CD8-positive, alpha-beta memory T cell (primary cell): ENCODE measurements at regions of chr9 and their contacts with region 1.

Region 1: DNA sequence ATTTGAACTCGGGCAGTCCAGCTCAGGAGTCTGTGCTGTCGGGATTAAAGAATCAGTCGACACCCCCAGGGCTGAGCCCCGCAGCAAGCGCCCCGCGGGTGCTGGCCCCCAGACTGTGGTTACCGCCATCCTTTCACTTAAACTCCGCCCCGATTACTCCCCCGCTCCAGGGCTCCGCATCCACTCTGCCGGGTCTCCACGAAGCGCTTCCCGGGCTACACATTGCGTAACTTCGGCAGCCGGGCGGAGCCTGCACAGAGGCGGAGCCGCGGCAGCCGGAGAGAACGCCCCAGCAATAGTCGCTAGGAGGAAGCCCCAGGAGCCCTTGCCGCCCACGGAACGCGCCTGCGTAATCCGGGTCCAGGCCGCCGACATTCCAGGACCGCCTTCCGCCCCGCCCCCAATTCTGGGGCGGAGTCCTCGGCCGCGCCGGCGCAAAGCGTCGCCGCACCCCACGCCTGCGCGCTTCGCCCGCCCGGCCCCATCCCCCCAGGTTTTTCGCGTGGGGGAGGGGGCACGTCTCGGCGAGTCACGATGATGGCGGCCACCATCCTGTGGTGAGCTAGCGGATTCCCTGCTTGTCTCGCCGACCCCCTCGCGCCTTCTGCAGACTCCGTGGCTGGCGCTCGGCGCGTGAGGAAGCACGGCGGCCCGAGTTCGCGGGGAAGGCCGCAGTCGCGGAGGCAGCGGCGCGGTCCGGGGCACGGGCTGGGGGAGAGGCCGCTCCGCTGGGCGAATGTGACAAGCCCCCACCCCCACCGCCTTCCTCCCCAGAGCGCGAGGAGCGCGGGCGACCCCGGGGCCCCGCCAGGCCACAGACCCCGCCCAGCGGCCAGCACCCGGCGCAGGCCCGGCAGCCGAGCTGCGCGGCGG is at the start of gene RAD23B:
- DNase-seq: peak; percentile 97 to 99 (median 99)
- H3K4me3 ChIP-seq: peak within 1 kb of the TSS; percentile 86
- H3K4me3 Mint-ChIP-seq: peak within 1 kb of the TSS; percentile 89 to 99 (median 96)
- H3K27ac ChIP-seq: peak within 1 kb of the TSS; percentile 85
- H3K27ac Mint-ChIP-seq: peak within 1 kb of the TSS; percentile 76 to 99 (median 97)
- H3K4me1 ChIP-seq: peaks cover 32% of the 10 kb centered on the region
- H3K4me1 Mint-ChIP-seq: peaks cover 40 to 47% (median 46%) of the 10 kb centered on the region in 3 donors
- H3K27me3 ChIP-seq: no peaks in the 10 kb centered on the region
- H3K27me3 Mint-ChIP-seq: peaks cover 0 to 3% of the 10 kb centered on the region in 2 donors
- total RNA-seq, gene RAD23B: 146 to 150 TPM

Region 2: DNA sequence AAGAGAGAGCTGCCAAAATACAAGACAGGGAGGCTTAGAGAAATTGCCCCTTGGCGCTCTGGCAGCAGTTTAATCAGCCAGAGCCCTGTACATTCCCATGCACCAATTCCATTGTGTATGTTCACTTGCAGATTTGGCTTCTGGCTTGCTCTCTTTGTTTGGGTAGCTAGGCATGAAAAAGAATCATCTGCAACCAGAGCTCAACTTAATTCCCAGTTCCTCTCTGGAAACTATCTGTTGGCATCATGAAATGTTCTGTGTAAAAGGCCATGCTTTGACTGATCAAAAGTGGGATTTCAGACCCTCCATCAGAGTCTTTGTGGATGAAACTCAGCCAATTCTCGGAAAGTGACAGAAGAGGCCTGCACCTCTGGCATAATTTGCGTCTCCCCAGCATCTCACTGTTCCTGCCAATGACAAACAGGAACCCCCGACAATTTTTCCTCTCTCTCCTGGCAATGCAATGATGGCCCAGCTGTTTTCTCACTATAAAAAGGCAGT is 53.7 kb before region 1 on chr9:
- CTCF ChIA-PET with region 1: no interaction called
- POLR2A ChIA-PET with region 1: no interaction called
- DNase-seq: no peak
- H3K4me3 ChIP-seq: no peak overlapping the region
- H3K4me3 Mint-ChIP-seq: no peak overlapping the region
- H3K27ac ChIP-seq: no peak overlapping the region
- H3K27ac Mint-ChIP-seq: peak overlapping the region in 1 of 8 donors; percentile 75
- H3K4me1 ChIP-seq: no peaks in the 10 kb centered on the region
- H3K4me1 Mint-ChIP-seq: no peaks in the 10 kb centered on the region
- H3K27me3 ChIP-seq: no peaks in the 10 kb centered on the region
- H3K27me3 Mint-ChIP-seq: peaks cover 14 to 49% of the 10 kb centered on the region in 2 donors

Region 3: DNA sequence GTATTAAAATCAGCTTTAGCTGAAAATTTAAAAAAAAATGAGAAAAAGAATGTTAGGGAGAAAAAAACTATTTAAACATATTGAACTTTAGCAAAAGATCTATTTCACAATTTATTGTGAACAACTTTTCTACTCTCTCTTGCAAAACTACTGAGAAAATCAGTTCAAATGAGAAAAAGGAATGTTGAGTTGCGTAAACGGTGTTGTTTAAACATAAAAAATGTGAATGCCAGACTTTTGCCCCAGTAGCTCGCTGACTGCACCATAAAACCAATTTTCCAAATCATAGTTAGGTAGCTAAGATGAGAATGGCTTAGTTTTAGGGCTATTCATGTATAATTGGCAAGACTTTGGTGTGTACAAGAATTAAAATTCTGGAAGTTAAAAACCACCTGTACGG is 13.3 kb before region 1 on chr9:
- CTCF ChIA-PET with region 1: no interaction called
- POLR2A ChIA-PET with region 1: no interaction called
- DNase-seq: no peak
- H3K4me3 ChIP-seq: no peak overlapping the region
- H3K4me3 Mint-ChIP-seq: no peak overlapping the region
- H3K27ac ChIP-seq: no peak overlapping the region
- H3K27ac Mint-ChIP-seq: no peak overlapping the region
- H3K4me1 ChIP-seq: no peaks in the 10 kb centered on the region
- H3K4me1 Mint-ChIP-seq: peaks cover 0 to 4% (median 3%) of the 10 kb centered on the region in 3 donors
- H3K27me3 ChIP-seq: peaks cover 5% of the 10 kb centered on the region
- H3K27me3 Mint-ChIP-seq: peaks cover 8 to 35% of the 10 kb centered on the region in 2 donors

Region 4: GRCh38 chr9:107295995-107296394 is 13.0 kb after region 1 on chr9:
- CTCF ChIA-PET with region 1: interaction called, 6 read pairs
- POLR2A ChIA-PET with region 1: interaction called, 11 read pairs
- DNase-seq: no peak
- H3K4me3 ChIP-seq: no peak overlapping the region
- H3K4me3 Mint-ChIP-seq: peak overlapping the region in 2 of 7 donors; percentile 2 to 16
- H3K27ac ChIP-seq: no peak overlapping the region
- H3K27ac Mint-ChIP-seq: peak overlapping the region in 6 of 8 donors; percentile 0 to 53 (median 18)
- H3K4me1 ChIP-seq: peaks cover 39% of the 10 kb centered on the region
- H3K4me1 Mint-ChIP-seq: peaks cover 60 to 82% (median 71%) of the 10 kb centered on the region in 3 donors
- H3K27me3 ChIP-seq: no peaks in the 10 kb centered on the region
- H3K27me3 Mint-ChIP-seq: no peaks in the 10 kb centered on the region